ENCODE measurements at regions of chr4 and their contacts with region 1.

Region 1: GRCh38 chr4:43776371-43776770 is 672.2 kb downstream of the KCTD8 start:
- DNase-seq: peak; percentile 3
- ATAC-seq: no peak
- H3K4me3 ChIP-seq: no peak overlapping the region
- H3K27ac ChIP-seq: no peak overlapping the region
- H3K4me1 ChIP-seq: no peaks in the 10 kb centered on the region
- H3K27me3 ChIP-seq: no peaks in the 10 kb centered on the region
- CTCF ChIP-seq: no peak
- EP300 ChIP-seq: no peak
- POLR2A ChIP-seq: no peak
- RAD21 ChIP-seq: no peak

Region 2: DNA sequence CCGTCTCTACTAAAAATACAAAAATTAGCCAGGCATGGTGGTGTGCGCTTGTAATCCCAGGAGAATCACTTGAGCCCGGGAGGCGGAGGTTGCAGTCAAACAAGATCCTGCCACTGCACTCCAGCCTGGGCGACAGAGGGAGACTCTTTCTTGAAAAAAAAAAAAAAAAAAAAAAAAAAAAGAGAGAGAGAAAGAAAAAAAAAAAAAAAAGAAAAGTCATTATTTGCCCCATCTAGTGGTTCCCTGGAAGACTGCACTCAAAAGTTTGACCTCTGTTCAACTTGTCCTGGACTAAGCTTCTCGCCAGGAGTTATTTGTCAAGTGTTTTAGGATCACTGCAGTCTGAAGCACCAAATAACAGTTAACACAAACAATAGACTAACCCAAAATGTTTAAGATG is 717.6 kb after region 1 on chr4:
- CTCF ChIA-PET with region 1: interaction called, 4 read pairs
- POLR2A ChIA-PET with region 1: no interaction called
- in situ Hi-C with region 1: no loop called
- intact Hi-C with region 1: loop called (anchors 2 kb)
- DNase-seq: peak; percentile 20
- ATAC-seq: peak; percentile 82
- H3K4me3 ChIP-seq: no peak overlapping the region
- H3K27ac ChIP-seq: no peak overlapping the region
- H3K4me1 ChIP-seq: no peaks in the 10 kb centered on the region
- H3K27me3 ChIP-seq: no peaks in the 10 kb centered on the region
- CTCF ChIP-seq: peak; percentile 20; the same call in 1 of the 2 replicates
- EP300 ChIP-seq: no peak
- POLR2A ChIP-seq: no peak
- RAD21 ChIP-seq: no peak

Region 3: DNA sequence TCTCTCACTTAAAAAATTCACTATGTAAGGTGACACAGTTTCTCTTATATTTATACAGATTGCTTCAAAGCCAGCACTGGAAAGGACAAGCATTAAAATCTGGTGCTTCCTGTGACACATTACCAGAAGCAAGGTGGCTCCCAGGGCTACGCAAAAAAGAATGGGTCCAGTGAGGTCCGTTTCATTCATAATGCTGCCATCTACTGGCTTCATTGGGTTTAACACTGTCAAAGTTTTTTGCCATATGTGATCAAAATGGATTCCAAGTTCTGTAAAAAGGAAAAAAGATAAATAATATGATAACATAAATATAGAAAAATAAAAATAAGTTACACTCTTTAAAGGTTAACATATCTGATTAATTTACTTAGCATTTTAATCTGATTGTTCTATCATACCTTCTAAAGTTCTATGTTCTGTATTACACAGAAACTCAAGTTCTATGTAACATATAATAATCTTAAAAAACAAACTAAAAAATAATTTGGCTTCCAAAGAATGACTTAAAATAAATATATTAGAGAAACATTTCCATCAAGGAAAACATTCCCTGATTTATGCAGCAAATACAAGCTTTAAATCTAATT is 853.0 kb after region 1 on chr4:
- CTCF ChIA-PET with region 1: interaction called, 5 read pairs
- POLR2A ChIA-PET with region 1: no interaction called
- in situ Hi-C with region 1: no loop called
- intact Hi-C with region 1: loop called (anchors 5 kb)
- DNase-seq: peak; percentile 41
- ATAC-seq: peak; percentile 85
- H3K4me3 ChIP-seq: no peak overlapping the region
- H3K27ac ChIP-seq: no peak overlapping the region
- H3K4me1 ChIP-seq: no peaks in the 10 kb centered on the region
- H3K27me3 ChIP-seq: no peaks in the 10 kb centered on the region
- CTCF ChIP-seq: peak; percentile 69
- EP300 ChIP-seq: no peak
- POLR2A ChIP-seq: no peak
- RAD21 ChIP-seq: no peak